IMR-90 (cell line): ENCODE measurements at regions of chr5 and their contacts with region 1.

Region 1: DNA sequence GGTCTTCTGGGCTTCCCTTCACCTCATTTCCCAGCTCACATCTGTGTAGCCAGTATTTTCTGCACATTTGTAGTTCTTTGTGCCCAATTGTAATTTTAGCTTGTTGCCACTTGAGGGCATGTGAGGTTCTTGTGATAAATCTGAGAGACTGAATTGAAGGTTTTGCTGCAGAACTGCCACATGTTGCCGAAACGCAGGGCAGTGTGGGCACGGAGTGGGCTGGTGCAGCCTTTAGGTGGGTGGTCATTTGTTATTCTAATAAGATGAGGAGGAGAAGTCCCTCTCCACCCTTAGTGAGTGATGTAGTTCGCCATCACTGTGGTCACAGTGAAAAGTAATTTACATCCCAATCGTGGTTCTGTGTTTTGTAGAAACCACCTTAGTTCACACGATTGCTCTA is 21.2 kb downstream of the OTULIN start:
- DNase-seq: peak; percentile 69
- ATAC-seq: peak; percentile 89
- H3K4me3 ChIP-seq: no peak overlapping the region
- H3K27ac ChIP-seq: no peak overlapping the region
- H3K4me1 ChIP-seq: peaks cover 3% of the 10 kb centered on the region
- H3K27me3 ChIP-seq: no peaks in the 10 kb centered on the region
- CTCF ChIP-seq: peak; percentile 76
- POLR2A ChIP-seq: no peak
- RAD21 ChIP-seq: peak; percentile 86

Region 2: GRCh38 chr5:15013654-15014463 is 328.1 kb after region 1 on chr5:
- CTCF ChIA-PET with region 1: interaction called, 14 read pairs
- POLR2A ChIA-PET with region 1: no interaction called
- dilution Hi-C with region 1: no loop called
- in situ Hi-C with region 1: no loop called
- intact Hi-C with region 1: loop called (anchors 1 kb)
- DNase-seq: peak; percentile 80
- ATAC-seq: peak; percentile 75
- H3K4me3 ChIP-seq: no peak overlapping the region
- H3K27ac ChIP-seq: no peak overlapping the region
- H3K4me1 ChIP-seq: peaks cover 12% of the 10 kb centered on the region
- H3K27me3 ChIP-seq: no peaks in the 10 kb centered on the region
- CTCF ChIP-seq: peak; percentile 76
- POLR2A ChIP-seq: no peak
- RAD21 ChIP-seq: peak; percentile 79

Region 3: GRCh38 chr5:15079566-15079965 is 393.8 kb after region 1 on chr5:
- CTCF ChIA-PET with region 1: no interaction called
- POLR2A ChIA-PET with region 1: no interaction called
- dilution Hi-C with region 1: no loop called
- in situ Hi-C with region 1: no loop called
- intact Hi-C with region 1: no loop called
- DNase-seq: no peak
- ATAC-seq: no peak
- H3K4me3 ChIP-seq: no peak overlapping the region
- H3K27ac ChIP-seq: no peak overlapping the region
- H3K4me1 ChIP-seq: no peaks in the 10 kb centered on the region
- H3K27me3 ChIP-seq: peaks cover 2% of the 10 kb centered on the region; the same call in 1 of the 2 replicates
- CTCF ChIP-seq: no peak
- POLR2A ChIP-seq: no peak
- RAD21 ChIP-seq: no peak

Region 4: GRCh38 chr5:15105796-15106393 is 420.1 kb after region 1 on chr5:
- CTCF ChIA-PET with region 1: no interaction called
- POLR2A ChIA-PET with region 1: no interaction called
- dilution Hi-C with region 1: no loop called
- in situ Hi-C with region 1: no loop called
- intact Hi-C with region 1: loop called (anchors 10 kb)
- DNase-seq: peak; percentile 54
- ATAC-seq: peak; percentile 90
- H3K4me3 ChIP-seq: no peak overlapping the region
- H3K27ac ChIP-seq: no peak overlapping the region
- H3K4me1 ChIP-seq: no peaks in the 10 kb centered on the region
- H3K27me3 ChIP-seq: peaks cover 5% of the 10 kb centered on the region; the same call in 1 of the 2 replicates
- CTCF ChIP-seq: peak; percentile 68
- POLR2A ChIP-seq: no peak
- RAD21 ChIP-seq: peak; percentile 62

Region 5: GRCh38 chr5:15183522-15183921 is 497.8 kb after region 1 on chr5:
- CTCF ChIA-PET with region 1: no interaction called
- POLR2A ChIA-PET with region 1: no interaction called
- dilution Hi-C with region 1: no loop called
- in situ Hi-C with region 1: no loop called
- intact Hi-C with region 1: loop called (anchors 2 kb)
- DNase-seq: peak; percentile 6
- ATAC-seq: no peak
- H3K4me3 ChIP-seq: no peak overlapping the region
- H3K27ac ChIP-seq: no peak overlapping the region
- H3K4me1 ChIP-seq: no peaks in the 10 kb centered on the region
- H3K27me3 ChIP-seq: no peaks in the 10 kb centered on the region; the same call in 1 of the 2 replicates
- CTCF ChIP-seq: peak; percentile 24; the same call in 1 of the 2 replicates
- POLR2A ChIP-seq: no peak
- RAD21 ChIP-seq: peak; percentile 20; the same call in 1 of the 2 replicates